Activated T-helper 1 cell treated with anti-CD3 and anti-CD28 coated beads, Interleukin-12 subunit alpha, Interleukin-12 subunit beta, Interleukin-2, Interleukin-4 antibody, amounts not matched to agents 30 ng/mL and 10 ng/mL and 1 ng/mL, durations not matched to agents 14 hours and 24 hours and 36 hours (primary cell): ENCODE measurements at regions of chr3 and their contacts with region 1.

Region 1: GRCh38 chr3:36843065-36844051 is 79.0 kb upstream of the DCLK3 start:
- DNase-seq: peak; percentile 28
- H3K4me3 Mint-ChIP-seq: peak overlapping the region; percentile 3
- H3K27ac Mint-ChIP-seq: no peak overlapping the region
- H3K4me1 Mint-ChIP-seq: peaks cover 20% of the 10 kb centered on the region
- H3K27me3 Mint-ChIP-seq: no peaks in the 10 kb centered on the region

Region 2: GRCh38 chr3:36597422-36597821 is 245.9 kb before region 1 on chr3:
- intact Hi-C with region 1: no loop called
- DNase-seq: no peak
- H3K4me3 Mint-ChIP-seq: no peak overlapping the region
- H3K27ac Mint-ChIP-seq: no peak overlapping the region
- H3K4me1 Mint-ChIP-seq: no peaks in the 10 kb centered on the region
- H3K27me3 Mint-ChIP-seq: no peaks in the 10 kb centered on the region

Region 3: GRCh38 chr3:36729204-36730056 is 113.9 kb before region 1 on chr3:
- intact Hi-C with region 1: loop called (anchors 1 kb)
- DNase-seq: no peak
- H3K4me3 Mint-ChIP-seq: no peak overlapping the region
- H3K27ac Mint-ChIP-seq: no peak overlapping the region
- H3K4me1 Mint-ChIP-seq: no peaks in the 10 kb centered on the region
- H3K27me3 Mint-ChIP-seq: peaks cover 14% of the 10 kb centered on the region

Region 4: DNA sequence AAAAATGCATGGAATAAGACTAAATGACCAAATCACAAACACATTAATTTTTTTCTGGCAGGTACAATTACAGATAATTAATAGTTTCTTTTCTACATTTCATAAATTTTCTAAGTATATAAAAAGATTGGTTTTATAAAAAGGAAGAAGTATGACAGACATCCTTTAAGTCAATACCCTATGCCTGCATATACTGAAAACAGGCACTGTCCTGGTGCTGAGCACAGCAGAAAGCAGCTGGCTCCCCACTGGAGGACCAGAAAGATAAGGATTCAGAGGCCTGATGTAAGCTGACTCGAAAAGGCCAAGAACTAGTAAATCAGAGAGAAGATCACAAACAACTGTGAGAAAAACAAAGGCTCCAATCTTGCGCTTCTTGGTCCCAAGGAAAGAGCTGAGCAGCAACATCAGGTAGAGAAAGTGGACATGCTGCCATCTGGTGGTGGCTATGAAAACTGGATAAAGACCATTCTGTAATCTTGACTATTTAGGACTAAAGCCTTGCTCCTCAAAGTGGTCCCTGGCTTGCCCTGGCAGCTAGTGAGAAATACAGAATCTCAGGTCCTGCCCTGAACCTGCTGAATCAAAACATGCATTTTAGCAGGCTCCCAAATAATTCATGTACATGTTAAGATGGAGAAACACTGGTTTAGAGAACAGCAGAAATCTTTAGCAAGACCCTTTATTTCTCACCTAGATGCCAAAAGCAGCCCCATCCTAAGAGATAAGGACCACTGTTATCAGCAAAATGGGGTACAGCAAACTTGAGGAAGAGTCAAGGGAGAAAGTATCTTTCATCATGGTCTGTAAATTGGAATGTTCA is 25.5 kb after region 1 on chr3:
- intact Hi-C with region 1: loop called (anchors 1 kb)
- DNase-seq: peak; percentile 24
- H3K4me3 Mint-ChIP-seq: no peak overlapping the region
- H3K27ac Mint-ChIP-seq: no peak overlapping the region
- H3K4me1 Mint-ChIP-seq: peaks cover 11% of the 10 kb centered on the region
- H3K27me3 Mint-ChIP-seq: peaks cover 6% of the 10 kb centered on the region

Region 5: GRCh38 chr3:36876181-36876936 is 33.0 kb after region 1 on chr3:
- intact Hi-C with region 1: loop called (anchors 1 kb)
- DNase-seq: peak; percentile 20
- H3K4me3 Mint-ChIP-seq: peak overlapping the region; percentile 55
- H3K27ac Mint-ChIP-seq: peak overlapping the region; percentile 69
- H3K4me1 Mint-ChIP-seq: peaks cover 25% of the 10 kb centered on the region
- H3K27me3 Mint-ChIP-seq: peaks cover 18% of the 10 kb centered on the region

Region 6: GRCh38 chr3:36911990-36912804 is 68.8 kb after region 1 on chr3:
- intact Hi-C with region 1: loop called (anchors 1 kb)
- DNase-seq: peak; percentile 40
- H3K4me3 Mint-ChIP-seq: peak overlapping the region; percentile 19
- H3K27ac Mint-ChIP-seq: peak overlapping the region; percentile 41
- H3K4me1 Mint-ChIP-seq: peaks cover 40% of the 10 kb centered on the region
- H3K27me3 Mint-ChIP-seq: no peaks in the 10 kb centered on the region